AG04450 (cell line): ENCODE measurements at regions of chr3 and their contacts with region 1.

Region 1: GRCh38 chr3:195850857-195851543 is 39.3 kb upstream of the MUC4 start:
- DNase-seq: peak; percentile 85
- H3K4me3 ChIP-seq: no peak overlapping the region
- H3K27ac ChIP-seq: no peak overlapping the region
- H3K27me3 ChIP-seq: no peaks in the 10 kb centered on the region
- CTCF ChIP-seq: peak; percentile 100

Region 2: GRCh38 chr3:195790614-195791300 is 60.2 kb before region 1 on chr3:
- CTCF ChIA-PET with region 1: no interaction called
- POLR2A ChIA-PET with region 1: no interaction called
- DNase-seq: no peak
- H3K4me3 ChIP-seq: no peak overlapping the region
- H3K27ac ChIP-seq: no peak overlapping the region
- H3K27me3 ChIP-seq: peaks cover 5% of the 10 kb centered on the region
- CTCF ChIP-seq: no peak

Region 3: DNA sequence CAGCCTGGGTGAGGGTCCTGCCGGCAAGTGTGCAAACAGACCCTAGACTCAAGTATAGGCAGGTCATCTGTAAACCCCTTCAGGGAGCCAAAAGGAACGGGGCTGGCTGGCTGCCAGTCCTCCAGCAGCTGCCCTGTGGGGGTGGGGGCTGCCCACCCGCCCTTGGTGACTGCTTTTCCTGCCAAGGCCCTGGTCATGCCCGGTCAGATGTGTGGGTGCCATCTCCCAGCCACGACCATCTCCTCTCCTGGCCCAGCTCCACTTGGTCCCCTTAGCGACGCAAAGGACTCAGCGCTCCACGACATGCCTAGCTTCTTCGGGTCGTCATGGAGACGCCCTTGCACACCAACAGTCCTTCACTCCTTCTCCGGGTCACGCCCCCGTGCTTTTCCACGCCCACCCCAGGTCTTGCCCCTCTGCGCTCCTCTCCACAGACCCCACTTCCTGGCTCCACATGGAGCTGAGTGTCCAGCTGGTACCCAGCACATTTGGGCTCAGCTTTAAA is 41.7 kb before region 1 on chr3:
- CTCF ChIA-PET with region 1: no interaction called
- POLR2A ChIA-PET with region 1: no interaction called
- DNase-seq: no peak
- H3K4me3 ChIP-seq: no peak overlapping the region
- H3K27ac ChIP-seq: no peak overlapping the region
- H3K27me3 ChIP-seq: peaks cover 24% of the 10 kb centered on the region
- CTCF ChIP-seq: no peak

Region 4: DNA sequence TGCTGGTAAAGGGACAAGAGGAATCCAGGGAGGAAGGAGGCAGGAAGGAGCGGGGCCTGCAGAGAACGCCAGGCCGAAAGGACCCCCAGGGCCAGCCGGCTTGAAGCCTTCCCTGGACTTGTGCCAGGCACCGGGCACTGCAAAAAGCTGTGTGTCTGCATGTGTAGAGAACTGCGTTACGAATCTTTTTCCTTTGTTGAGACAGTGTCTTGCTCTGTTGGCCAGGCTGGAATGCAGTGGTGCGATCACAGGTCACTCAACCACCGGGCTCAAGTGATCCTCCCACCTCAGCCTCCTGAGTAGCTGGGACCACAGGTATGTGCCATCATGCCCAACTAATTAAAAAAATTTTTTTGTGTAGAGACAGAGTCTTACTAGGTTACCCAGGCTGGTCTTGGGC is 22.2 kb before region 1 on chr3:
- CTCF ChIA-PET with region 1: interaction called, 15 read pairs
- POLR2A ChIA-PET with region 1: no interaction called
- DNase-seq: no peak
- H3K4me3 ChIP-seq: no peak overlapping the region
- H3K27ac ChIP-seq: no peak overlapping the region
- H3K27me3 ChIP-seq: peaks cover 14% of the 10 kb centered on the region
- CTCF ChIP-seq: no peak

Region 5: DNA sequence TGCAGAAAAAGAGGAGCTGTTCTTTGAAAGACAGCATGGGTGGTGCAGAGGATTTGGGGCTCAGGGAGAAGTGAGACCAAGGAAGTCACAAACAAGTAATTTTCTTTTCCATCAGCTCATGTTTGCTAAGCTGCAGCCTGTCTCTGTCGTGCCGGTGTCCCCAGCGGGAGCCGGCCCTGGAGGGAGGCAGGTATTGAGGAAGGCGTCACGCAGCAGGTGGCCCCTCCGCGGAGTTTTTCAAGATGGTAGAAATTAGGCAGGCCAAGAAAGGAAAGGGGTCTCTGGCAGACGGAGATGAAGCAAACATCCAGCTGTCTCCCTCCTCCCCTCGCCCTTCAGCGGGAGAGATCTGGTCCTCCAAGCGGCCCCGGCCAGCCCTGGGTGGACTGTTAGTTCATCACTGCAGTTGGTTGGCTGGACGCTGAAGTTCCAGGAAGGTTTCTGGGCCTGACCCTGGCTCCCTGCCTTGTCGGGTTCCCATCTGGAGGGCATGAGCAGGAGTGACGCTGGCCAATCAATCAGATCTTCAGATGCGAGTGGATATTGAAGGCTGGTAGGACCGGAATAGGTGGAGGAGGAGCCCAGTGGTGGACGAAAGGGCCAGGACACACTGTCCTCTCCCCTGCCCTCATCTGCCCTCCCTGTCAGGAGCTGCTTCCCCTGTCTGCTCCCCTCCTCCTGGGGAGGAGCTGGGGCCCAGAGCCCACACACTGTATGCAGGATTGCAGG is 11.6 kb before region 1 on chr3:
- CTCF ChIA-PET with region 1: interaction called, 17 read pairs
- POLR2A ChIA-PET with region 1: no interaction called
- DNase-seq: no peak
- H3K4me3 ChIP-seq: no peak overlapping the region
- H3K27ac ChIP-seq: no peak overlapping the region
- H3K27me3 ChIP-seq: peaks cover 17% of the 10 kb centered on the region
- CTCF ChIP-seq: no peak

Region 6: DNA sequence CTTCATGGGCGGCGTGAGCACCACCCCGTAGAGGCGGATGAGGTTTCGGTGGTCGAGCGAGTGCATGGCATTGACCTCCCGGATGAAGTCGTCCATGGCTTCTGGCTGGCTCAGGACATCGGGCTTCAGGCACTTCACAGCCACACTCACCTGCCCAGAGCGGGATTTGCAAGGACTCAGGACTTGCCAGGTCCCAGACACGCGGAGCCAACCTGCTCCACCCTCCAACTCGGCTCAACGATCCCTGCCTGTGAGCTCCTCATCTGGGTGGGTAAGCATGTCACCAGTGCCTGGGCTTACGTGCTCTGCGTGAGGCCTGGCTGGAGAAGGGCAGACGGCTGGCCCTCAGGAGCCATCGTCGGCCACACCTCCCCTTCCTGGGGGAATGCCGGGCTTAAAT is 32.2 kb after region 1 on chr3:
- CTCF ChIA-PET with region 1: no interaction called
- POLR2A ChIA-PET with region 1: no interaction called
- DNase-seq: no peak
- H3K4me3 ChIP-seq: no peak overlapping the region
- H3K27ac ChIP-seq: no peak overlapping the region
- H3K27me3 ChIP-seq: no peaks in the 10 kb centered on the region
- CTCF ChIP-seq: no peak

Region 7: GRCh38 chr3:195894780-195895607 is 44.0 kb after region 1 on chr3:
- CTCF ChIA-PET with region 1: interaction called, 143 read pairs
- POLR2A ChIA-PET with region 1: interaction called, 4 read pairs
- DNase-seq: peak; percentile 46
- H3K4me3 ChIP-seq: peak overlapping the region; percentile 72
- H3K27ac ChIP-seq: peak overlapping the region; percentile 31
- H3K27me3 ChIP-seq: no peaks in the 10 kb centered on the region
- CTCF ChIP-seq: peak; percentile 92